ENCODE measurements at regions of chr12 and their contacts with region 1.

Region 1: DNA sequence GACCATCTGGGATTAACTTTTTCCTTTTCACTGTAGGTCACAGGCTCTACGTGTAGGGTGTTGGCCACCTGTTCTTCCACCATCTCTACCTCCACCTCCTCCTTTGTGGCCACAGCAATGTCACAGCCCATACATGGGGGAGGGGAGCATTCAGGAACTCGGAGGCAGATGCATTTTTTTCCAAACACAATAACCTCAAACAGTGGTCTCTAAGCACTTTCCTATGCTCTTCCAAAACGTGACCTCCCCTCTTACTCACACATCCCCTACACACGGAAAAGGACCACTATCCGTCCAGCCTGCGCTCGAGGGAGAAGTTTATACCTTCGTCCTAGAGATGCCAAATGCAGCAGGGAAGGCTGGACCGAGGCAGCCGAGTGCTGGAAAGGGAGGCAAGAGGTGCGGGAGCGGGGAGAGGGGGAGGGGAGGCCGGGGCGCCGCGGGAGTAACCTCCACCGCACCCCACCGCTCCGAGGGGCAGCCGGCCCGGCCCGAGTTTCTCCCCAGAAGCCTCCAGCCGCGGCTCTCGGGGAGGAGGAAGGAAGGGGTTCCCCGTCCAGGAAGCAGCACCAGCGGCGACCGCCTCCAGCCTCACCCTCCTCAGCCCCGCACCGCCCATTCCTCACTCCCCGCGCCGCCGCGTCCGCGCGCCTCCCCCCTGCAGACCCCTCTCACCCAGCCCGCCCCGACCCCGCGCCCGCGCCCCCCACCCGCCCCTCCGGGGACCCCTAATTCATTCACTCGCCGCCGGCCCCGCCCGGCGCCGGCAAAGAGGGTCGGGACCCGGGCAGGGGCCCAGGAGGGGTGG is 594 bp downstream of the KRAS start:
- DNase-seq: peak; percentile 75
- ATAC-seq: peak; percentile 53

Region 2: GRCh38 chr12:25195056-25195971 is 54.8 kb before region 1 on chr12 and contains the starts of genes DNAI7 and ETFRF1:
- intact Hi-C with region 1: loop called (anchors 10 kb)
- DNase-seq: peak; percentile 100
- ATAC-seq: peak; percentile 100
- total RNA-seq, gene DNAI7: 0.89 TPM
- total RNA-seq, gene ETFRF1: 67.7 TPM

Measured in left ventricle myocardium superior (tissue), 1 donor.